ENCODE measurements at regions of chr15 and their contacts with region 1.

Region 1: DNA sequence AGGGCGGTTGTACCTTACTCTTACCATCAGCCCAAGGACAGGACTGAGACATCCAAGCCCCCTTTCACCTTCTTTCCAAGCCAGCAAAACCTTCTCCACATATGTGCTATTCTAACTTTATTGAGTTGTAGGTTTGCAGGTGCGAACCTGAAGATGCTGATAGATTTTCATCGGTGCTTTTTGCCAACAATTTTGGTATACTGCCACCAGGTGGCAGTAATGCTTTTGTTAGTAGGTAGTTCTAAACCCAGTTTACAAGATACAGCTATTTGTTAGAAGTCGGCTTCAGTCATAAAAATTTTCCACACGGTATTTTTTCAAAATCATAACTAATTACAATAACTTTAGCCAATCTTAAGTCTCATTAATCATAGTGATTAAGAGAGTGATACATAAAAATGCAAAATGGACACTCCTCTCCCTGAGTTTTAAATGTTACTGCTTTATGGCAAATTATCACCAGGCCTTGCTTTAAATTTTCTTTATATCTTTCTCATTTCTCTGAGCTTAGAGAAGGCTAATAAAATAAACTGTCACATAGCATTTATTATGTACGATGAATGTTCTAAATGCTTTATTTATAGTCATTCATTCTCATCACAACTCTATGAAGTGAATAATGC is 636 bp downstream of the TBC1D21 start:
- DNase-seq: peak; percentile 57
- ATAC-seq: peak; percentile 57
- H3K4me3 Mint-ChIP-seq: no peak overlapping the region
- H3K27ac Mint-ChIP-seq: no peak overlapping the region
- H3K4me1 Mint-ChIP-seq: peaks cover 10% of the 10 kb centered on the region
- H3K27me3 Mint-ChIP-seq: peaks cover 53% of the 10 kb centered on the region

Region 2: DNA sequence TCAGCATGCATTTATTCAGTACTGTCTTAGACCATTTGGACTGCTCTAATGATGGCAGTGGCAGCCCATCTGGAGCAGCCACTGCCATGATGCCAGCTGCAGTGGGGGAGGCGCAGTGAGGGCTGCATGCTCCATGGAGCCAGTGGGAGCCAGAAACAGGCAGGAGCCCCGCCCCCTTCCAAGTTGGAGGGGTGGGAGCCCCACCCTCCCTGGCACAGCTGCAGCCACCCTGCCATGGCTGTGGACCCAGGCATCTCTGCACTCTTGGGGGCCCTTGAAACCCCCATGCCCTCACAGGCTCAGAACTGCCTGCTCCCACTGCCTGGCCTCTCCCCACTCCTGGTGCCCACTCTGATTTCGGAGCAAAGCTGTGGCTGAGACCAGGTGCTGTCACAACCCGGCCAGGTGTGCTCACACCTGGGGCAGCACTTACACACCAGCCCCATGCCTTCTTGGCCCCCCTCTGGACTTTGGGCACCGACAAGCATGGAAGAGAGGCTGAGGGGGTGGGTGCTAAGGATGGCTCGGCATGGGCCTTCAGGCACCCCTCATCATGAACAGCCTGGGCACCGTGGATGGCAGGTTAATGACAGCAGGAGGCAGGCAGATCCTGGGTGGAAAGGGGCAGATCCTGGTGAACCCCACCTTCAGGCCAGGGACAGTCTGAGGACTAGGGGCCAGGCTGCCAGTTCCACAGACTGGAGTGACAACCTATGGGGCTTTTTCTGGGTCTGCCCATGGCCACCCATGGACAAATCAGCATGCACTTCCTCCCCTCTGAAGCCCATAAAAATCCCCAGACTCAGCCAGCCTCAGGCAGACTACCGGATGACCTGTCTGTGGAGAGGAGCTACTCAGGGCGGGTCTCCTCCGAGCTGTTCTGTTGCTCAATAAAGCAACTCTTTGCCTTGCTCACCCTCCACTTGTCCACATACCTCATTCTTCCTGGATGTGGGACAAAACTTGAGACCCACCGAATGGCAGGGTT is 17.6 kb after region 1 on chr15:
- CTCF ChIA-PET with region 1: interaction called, 17 read pairs
- DNase-seq: no peak
- ATAC-seq: no peak
- H3K4me3 Mint-ChIP-seq: no peak overlapping the region
- H3K27ac Mint-ChIP-seq: no peak overlapping the region
- H3K4me1 Mint-ChIP-seq: peaks cover 6% of the 10 kb centered on the region
- H3K27me3 Mint-ChIP-seq: peaks cover 25% of the 10 kb centered on the region

Region 3: DNA sequence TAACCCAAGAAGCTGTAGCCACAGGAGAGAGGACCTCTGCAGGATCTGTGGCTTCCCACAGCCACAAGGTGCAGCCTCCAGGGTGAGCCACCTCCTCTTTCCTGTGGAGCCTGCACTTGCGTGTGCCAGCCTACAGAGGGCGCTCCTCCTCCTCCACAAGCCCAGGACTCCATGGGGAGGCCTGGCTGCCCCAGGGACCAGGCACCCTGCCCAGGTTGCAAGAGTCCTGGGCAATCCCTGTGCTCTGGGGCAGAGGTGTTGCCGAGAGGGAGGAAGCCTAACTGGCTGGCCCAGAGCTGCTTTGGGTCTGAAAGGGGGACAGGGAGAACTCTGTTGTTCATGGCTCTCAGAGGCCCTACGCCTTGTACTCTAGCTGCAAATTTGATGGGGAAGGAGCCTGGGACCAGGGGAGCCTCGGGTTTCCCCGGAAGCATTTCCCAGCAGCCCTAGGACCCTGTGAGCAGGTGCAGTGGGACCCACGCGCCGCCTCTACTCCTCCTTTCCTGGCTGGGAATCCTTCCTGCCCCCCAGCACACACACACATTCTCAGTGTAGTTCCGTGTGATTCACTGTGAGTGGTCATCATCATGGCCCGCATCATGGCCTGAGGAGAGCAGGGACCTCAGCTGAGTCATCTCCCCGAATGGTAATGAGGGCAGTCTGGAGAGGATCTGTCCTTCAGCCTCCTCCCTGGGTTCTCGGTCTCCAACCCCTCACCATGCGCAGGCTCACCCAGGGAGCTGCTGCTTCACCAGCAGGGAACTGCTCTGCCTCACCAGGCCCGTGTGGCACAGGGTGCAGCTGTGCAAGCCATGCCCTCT is 23.7 kb after region 1 on chr15:
- CTCF ChIA-PET with region 1: interaction called, 31 read pairs
- DNase-seq: peak; percentile 90
- ATAC-seq: peak; percentile 94
- H3K4me3 Mint-ChIP-seq: no peak overlapping the region
- H3K27ac Mint-ChIP-seq: no peak overlapping the region
- H3K4me1 Mint-ChIP-seq: peaks cover 15% of the 10 kb centered on the region
- H3K27me3 Mint-ChIP-seq: peaks cover 10% of the 10 kb centered on the region

Region 4: DNA sequence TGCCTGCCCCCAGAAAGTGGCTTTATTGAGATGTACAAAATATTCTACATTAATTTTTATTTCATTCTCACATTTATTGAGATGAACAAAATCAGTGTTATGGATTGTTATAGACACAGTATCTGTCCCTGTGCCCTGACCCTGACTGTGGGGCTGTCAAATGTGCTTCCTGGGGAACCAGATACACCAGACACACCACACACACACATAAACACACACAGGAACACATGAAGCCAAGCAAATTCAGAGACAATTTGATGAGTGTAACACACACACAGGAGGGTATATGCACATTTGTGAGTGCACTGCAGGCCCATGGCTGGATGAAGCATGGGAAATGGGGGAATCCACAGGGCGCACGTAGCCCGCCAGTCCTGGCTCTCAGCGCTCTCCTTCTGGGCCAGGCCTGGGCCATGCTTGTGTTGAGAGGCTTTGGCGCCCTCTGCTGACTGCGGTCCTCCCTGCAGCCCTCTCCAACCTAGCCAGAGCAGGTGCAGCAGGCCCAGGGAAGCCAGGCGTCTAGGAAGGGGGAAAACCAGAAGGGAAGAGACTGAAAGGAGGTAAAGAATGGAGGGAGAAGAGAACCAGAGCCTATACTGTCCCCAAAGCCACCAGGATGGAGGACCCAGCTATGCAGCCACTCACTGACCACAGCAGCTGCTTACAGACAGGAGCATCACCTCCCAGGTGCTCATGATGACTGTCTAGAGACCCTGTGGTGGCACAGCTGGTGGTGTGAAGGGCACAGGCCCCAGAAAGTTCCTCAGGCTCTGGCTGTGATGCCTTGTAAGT is 34.2 kb after region 1 on chr15:
- CTCF ChIA-PET with region 1: interaction called, 122 read pairs
- DNase-seq: peak; percentile 86
- ATAC-seq: peak; percentile 98
- H3K4me3 Mint-ChIP-seq: no peak overlapping the region
- H3K27ac Mint-ChIP-seq: no peak overlapping the region
- H3K4me1 Mint-ChIP-seq: peaks cover 27% of the 10 kb centered on the region
- H3K27me3 Mint-ChIP-seq: no peaks in the 10 kb centered on the region

Region 5: DNA sequence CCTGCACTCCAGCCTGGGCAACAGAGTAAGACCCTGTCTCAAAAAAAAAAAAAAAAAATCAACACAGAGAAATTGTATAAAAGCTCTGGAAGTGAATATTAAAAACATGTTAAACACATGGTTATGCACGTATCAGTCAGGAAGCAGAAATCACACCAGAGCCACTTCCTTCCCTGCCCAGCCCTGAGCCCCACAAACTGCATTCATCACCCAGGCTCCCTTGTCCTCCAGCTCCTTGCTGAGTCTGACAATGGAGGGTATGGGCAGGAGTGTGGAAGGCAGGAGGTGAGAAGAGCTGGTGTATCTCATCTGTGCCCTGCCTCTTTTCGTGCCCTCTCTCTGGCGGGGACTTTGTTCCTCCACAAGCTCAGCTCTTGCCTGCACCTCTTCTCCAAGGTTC is 40.1 kb after region 1 on chr15:
- CTCF ChIA-PET with region 1: interaction called, 122 read pairs
- DNase-seq: peak; percentile 69
- ATAC-seq: peak; percentile 94
- H3K4me3 Mint-ChIP-seq: no peak overlapping the region
- H3K27ac Mint-ChIP-seq: peak overlapping the region; percentile 72
- H3K4me1 Mint-ChIP-seq: peaks cover 33% of the 10 kb centered on the region
- H3K27me3 Mint-ChIP-seq: no peaks in the 10 kb centered on the region

Region 6: DNA sequence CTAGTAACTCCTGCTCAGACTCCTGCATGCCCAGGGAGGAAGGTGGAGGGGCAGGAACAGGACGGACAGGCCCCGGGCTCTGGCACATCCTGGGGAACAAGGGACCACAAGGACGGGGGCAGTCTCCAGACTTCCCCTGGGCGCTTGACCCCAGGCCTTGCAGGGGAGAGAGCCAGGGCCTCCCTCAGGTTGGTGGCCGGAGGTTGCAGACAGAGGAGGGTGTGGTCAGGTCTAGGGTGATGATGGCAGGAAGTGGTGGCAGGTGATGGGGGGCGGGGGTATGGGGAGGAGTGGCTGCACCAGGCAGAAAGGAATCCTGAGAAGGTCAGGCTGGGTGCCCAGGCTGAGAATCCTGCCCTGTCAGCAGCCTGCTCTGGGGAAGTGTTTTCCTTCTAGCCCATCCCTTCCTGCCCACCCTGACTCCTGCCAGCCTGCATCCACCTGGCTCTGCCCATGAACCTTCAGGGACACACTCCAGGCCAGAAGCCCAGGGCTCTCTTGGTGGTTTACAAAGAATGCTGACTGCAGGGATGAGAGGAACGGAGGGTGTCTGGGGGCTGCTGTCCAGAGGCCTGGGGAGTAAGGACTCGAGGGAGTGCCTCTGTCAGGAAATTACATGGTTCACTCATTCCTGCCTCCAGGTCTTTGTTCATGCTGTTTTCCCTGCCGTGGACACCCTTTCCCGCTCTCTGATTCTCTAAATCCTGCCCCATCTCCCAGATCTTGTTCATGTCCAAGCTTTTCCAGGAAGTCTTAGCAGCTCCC is 68.1 kb after region 1 on chr15:
- CTCF ChIA-PET with region 1: no interaction called
- DNase-seq: peak; percentile 69
- ATAC-seq: peak; percentile 76
- H3K4me3 Mint-ChIP-seq: no peak overlapping the region
- H3K27ac Mint-ChIP-seq: peak overlapping the region; percentile 15
- H3K4me1 Mint-ChIP-seq: peaks cover 18% of the 10 kb centered on the region
- H3K27me3 Mint-ChIP-seq: no peaks in the 10 kb centered on the region

Measured in activated CD8-positive, alpha-beta memory T cell treated with anti-CD3 and anti-CD28 coated beads, Interleukin-2, amount 10 ng/mL, durations not matched to agents 7 days and 5 days (primary cell).